ENCODE measurements at regions of chr5 and their contacts with region 1.

Region 1: GRCh38 chr5:128213340-128213739 is 129.8 kb downstream of the SLC12A2 start:
- DNase-seq: peak in 7 of 9 donors; percentile 8 to 40 (median 24)
- ATAC-seq: peak; percentile 54
- H3K4me3 ChIP-seq: no peak overlapping the region
- H3K4me3 Mint-ChIP-seq: no peak overlapping the region
- H3K27ac ChIP-seq: no peak overlapping the region
- H3K27ac Mint-ChIP-seq: no peak overlapping the region
- H3K4me1 ChIP-seq: no peaks in the 10 kb centered on the region
- H3K4me1 Mint-ChIP-seq: peaks cover 0 to 3% (median 0%) of the 10 kb centered on the region in 7 donors
- H3K27me3 ChIP-seq: no peaks in the 10 kb centered on the region
- H3K27me3 Mint-ChIP-seq: peaks cover 4 to 12% (median 8%) of the 10 kb centered on the region in 5 donors

Region 2: GRCh38 chr5:128241051-128241695 is 27.8 kb after region 1 on chr5:
- CTCF ChIA-PET with region 1: no interaction called
- POLR2A ChIA-PET with region 1: no interaction called
- intact Hi-C with region 1: no loop called
- DNase-seq: no peak
- ATAC-seq: no peak
- H3K4me3 ChIP-seq: no peak overlapping the region
- H3K4me3 Mint-ChIP-seq: no peak overlapping the region
- H3K27ac ChIP-seq: no peak overlapping the region
- H3K27ac Mint-ChIP-seq: no peak overlapping the region
- H3K4me1 ChIP-seq: no peaks in the 10 kb centered on the region
- H3K4me1 Mint-ChIP-seq: no peaks in the 10 kb centered on the region
- H3K27me3 ChIP-seq: no peaks in the 10 kb centered on the region
- H3K27me3 Mint-ChIP-seq: peaks cover 0 to 41% (median 23%) of the 10 kb centered on the region in 5 donors

Region 3: DNA sequence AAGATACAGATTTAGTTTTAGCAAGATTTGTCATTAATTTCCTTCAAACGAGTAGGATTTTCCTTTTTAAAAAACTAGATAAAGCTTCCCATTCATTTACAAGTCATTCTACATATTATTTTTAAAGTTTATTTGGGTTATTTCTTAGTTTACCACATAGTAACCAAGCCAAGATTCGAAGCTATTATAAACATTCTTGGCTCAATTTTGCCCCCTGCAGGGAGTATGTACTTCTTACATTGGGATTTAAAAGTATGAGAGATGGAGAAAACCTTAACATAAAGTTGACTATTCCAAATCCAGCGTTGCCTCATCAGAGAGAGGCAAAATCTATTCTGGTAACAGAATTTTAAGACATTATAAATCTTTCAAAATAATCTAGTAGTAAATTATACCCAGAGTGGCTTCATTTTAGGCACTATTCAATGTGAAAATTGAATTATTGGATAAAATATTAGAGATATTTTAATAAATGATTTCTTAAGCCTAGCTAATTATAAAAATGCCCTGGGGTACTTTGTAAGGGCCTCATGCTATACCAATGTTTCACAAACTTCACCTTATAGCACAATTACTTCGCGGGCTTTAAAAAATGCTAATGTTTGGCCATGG is 285.6 kb after region 1 on chr5:
- CTCF ChIA-PET with region 1: no interaction called
- POLR2A ChIA-PET with region 1: no interaction called
- intact Hi-C with region 1: loop called in 1 of 2 experiments (anchors 2 kb)
- DNase-seq: no peak
- ATAC-seq: no peak
- H3K4me3 ChIP-seq: no peak overlapping the region
- H3K4me3 Mint-ChIP-seq: no peak overlapping the region
- H3K27ac ChIP-seq: no peak overlapping the region
- H3K27ac Mint-ChIP-seq: no peak overlapping the region
- H3K4me1 ChIP-seq: no peaks in the 10 kb centered on the region
- H3K4me1 Mint-ChIP-seq: no peaks in the 10 kb centered on the region
- H3K27me3 ChIP-seq: no peaks in the 10 kb centered on the region
- H3K27me3 Mint-ChIP-seq: no peaks in the 10 kb centered on the region

Region 4: GRCh38 chr5:128674825-128675446 is 461.6 kb after region 1 on chr5:
- CTCF ChIA-PET with region 1: no interaction called
- POLR2A ChIA-PET with region 1: no interaction called
- intact Hi-C with region 1: loop called in 1 of 2 experiments (anchors 1 kb)
- DNase-seq: peak in 7 of 9 donors; percentile 1 to 23 (median 4)
- ATAC-seq: peak; percentile 59
- H3K4me3 ChIP-seq: no peak overlapping the region
- H3K4me3 Mint-ChIP-seq: no peak overlapping the region
- H3K27ac ChIP-seq: no peak overlapping the region
- H3K27ac Mint-ChIP-seq: no peak overlapping the region
- H3K4me1 ChIP-seq: no peaks in the 10 kb centered on the region
- H3K4me1 Mint-ChIP-seq: no peaks in the 10 kb centered on the region
- H3K27me3 ChIP-seq: no peaks in the 10 kb centered on the region
- H3K27me3 Mint-ChIP-seq: peaks cover 0 to 11% (median 3%) of the 10 kb centered on the region in 5 donors

Region 5: DNA sequence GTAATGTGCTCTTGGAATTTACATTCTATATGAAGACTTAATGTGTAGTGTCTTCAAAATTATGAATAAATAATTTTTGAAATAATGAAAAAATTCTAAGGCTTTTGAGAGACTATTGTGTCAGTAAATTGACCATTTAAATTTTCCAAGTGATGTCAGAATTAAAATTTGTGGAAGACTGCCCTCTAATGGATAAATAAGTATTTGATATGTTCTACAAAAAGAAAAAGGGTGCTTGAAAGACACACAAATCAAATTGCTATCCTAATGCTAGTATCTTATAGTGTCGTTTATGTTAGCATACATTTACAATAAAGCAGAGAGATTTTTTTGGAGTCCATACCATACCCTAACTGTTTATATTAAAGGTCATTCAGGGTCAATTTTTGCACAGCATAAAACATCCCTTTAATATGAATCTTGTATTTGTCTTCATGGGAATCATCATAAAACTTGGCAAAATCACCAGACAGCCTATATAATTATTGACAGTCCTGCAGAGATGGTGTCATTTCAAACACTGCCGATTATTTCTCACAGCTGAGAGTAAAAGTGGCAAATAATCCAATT is 631.1 kb after region 1 on chr5:
- CTCF ChIA-PET with region 1: no interaction called
- POLR2A ChIA-PET with region 1: no interaction called
- intact Hi-C with region 1: loop called (anchors 2 kb)
- DNase-seq: no peak
- ATAC-seq: no peak
- H3K4me3 ChIP-seq: no peak overlapping the region
- H3K4me3 Mint-ChIP-seq: no peak overlapping the region
- H3K27ac ChIP-seq: no peak overlapping the region
- H3K27ac Mint-ChIP-seq: no peak overlapping the region
- H3K4me1 ChIP-seq: no peaks in the 10 kb centered on the region
- H3K4me1 Mint-ChIP-seq: no peaks in the 10 kb centered on the region
- H3K27me3 ChIP-seq: no peaks in the 10 kb centered on the region
- H3K27me3 Mint-ChIP-seq: no peaks in the 10 kb centered on the region

Region 6: GRCh38 chr5:129125810-129126209 is 912.5 kb after region 1 on chr5:
- CTCF ChIA-PET with region 1: no interaction called
- POLR2A ChIA-PET with region 1: no interaction called
- intact Hi-C with region 1: loop called in 1 of 2 experiments (anchors 10 kb)
- DNase-seq: peak in 1 of 9 donors; percentile 17
- ATAC-seq: peak; percentile 49
- H3K4me3 ChIP-seq: peak overlapping the region; percentile 29
- H3K4me3 Mint-ChIP-seq: peak overlapping the region in 9 of 10 donors; percentile 36 to 80 (median 63)
- H3K27ac ChIP-seq: peak overlapping the region; percentile 43
- H3K27ac Mint-ChIP-seq: peak overlapping the region; percentile 55 to 87 (median 82)
- H3K4me1 ChIP-seq: peaks cover 0 to 14% of the 10 kb centered on the region in 2 donors
- H3K4me1 Mint-ChIP-seq: peaks cover 7 to 18% (median 12%) of the 10 kb centered on the region in 7 donors
- H3K27me3 ChIP-seq: no peaks in the 10 kb centered on the region
- H3K27me3 Mint-ChIP-seq: no peaks in the 10 kb centered on the region

Region 7: GRCh38 chr5:129852747-129853352 is 1639.5 kb after region 1 on chr5:
- CTCF ChIA-PET with region 1: no interaction called
- POLR2A ChIA-PET with region 1: no interaction called
- intact Hi-C with region 1: loop called in 1 of 2 experiments (anchors 5 kb)
- DNase-seq: peak; percentile 3 to 71 (median 35)
- ATAC-seq: peak; percentile 76
- H3K4me3 ChIP-seq: no peak overlapping the region
- H3K4me3 Mint-ChIP-seq: no peak overlapping the region
- H3K27ac ChIP-seq: no peak overlapping the region
- H3K27ac Mint-ChIP-seq: no peak overlapping the region
- H3K4me1 ChIP-seq: no peaks in the 10 kb centered on the region
- H3K4me1 Mint-ChIP-seq: no peaks in the 10 kb centered on the region
- H3K27me3 ChIP-seq: no peaks in the 10 kb centered on the region
- H3K27me3 Mint-ChIP-seq: peaks cover 0 to 23% (median 11%) of the 10 kb centered on the region in 5 donors